ENCODE measurements at regions of chr6 and their contacts with region 1.

Region 1: DNA sequence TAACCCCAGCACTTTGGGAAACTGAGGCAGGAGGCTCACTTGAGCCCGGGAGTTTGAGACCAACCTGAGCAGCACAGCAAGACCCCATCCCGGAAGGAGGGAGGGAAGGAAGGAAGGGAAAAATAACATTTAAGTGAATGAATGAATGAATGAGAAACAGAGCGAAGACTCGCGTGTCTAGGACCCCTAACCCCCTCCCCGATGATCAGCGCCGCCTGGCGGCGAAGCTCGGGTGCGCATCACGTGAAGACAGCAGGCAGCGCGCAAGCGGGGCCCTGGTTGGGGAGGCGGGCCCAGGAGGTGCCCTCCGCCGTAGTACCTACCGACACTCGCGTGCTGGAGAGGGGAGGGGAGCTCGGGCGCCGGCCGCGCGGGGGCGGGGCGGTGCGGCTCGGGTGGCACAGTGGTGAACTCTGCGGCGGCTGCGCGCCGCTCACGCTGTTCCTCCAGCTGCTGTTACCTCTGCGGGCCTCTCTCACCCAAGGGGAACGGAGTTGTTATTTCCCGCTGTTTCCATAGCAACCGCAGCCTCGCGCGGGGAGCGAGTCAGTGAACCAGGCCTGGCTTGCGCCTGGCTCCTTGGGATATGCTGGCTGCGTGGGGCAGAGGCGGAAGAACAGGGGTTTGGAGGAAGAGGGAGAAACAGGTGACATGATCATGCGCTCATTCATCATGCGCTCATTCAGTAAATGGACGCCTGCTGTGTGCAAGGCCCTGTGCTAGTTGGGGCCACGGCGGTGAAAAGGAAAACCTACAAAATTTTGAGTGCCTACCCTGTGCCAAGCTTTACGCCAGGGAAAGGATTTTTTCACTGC is 2.0 kb upstream of the DCDC2 start:
- DNase-seq: peak; percentile 93 to 94
- H3K4me3 ChIP-seq: peak overlapping the region; percentile 47
- H3K4me3 Mint-ChIP-seq: peak overlapping the region; percentile 76
- H3K27ac Mint-ChIP-seq: peak overlapping the region; percentile 96
- H3K4me1 ChIP-seq: peaks cover 14% of the 10 kb centered on the region; the same call in 1 of the 2 replicates
- H3K4me1 Mint-ChIP-seq: peaks cover 8% of the 10 kb centered on the region
- H3K27me3 ChIP-seq: no peaks in the 10 kb centered on the region
- H3K27me3 Mint-ChIP-seq: no peaks in the 10 kb centered on the region
- CTCF ChIP-seq: peak; percentile 88

Region 2: DNA sequence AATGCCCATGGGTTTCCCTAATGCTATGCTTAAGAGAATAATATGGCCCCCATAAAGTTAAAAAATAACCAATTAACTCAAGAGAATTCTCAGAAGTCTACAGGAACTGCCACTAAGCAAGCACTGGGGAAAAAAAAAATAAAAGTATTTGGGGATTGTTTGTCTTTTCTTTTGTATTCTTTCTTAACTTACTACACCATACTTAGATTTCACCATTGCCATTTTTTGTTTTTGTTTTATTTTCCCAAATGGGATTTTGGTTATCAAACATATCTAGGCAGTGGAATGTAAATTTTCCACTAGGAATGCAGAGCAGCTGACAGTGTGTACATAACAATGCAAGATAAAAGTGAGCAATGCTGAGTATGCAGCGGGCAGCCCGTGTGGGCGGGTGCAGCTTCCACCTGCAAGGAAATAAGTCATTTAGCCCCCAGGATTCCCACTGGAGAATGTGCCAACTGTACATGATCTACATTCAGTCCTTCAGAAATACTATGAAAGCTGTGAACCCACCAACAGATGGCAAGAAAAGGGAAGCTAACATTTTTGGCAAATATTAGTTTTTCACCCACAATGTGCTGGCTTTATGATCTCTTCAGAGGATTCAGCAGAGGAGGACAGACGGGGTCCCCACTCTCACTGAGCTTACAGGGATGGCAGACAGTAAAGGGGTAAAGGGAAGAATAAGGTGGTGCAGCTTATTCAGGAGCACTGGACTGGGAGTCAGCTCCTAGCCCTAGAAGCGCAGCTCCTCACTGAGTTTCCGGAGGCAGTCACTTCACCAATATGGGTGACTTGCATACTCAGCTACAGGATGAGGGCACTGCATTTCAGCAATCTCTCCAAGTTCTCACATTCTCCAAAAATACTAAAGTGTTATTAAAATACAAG is 46.4 kb before region 1 on chr6:
- CTCF ChIA-PET with region 1: interaction called, 6 read pairs
- POLR2A ChIA-PET with region 1: interaction called, 5 read pairs
- intact Hi-C with region 1: loop called (anchors 1 kb)
- DNase-seq: peak; percentile 83 to 90
- H3K4me3 ChIP-seq: no peak overlapping the region
- H3K4me3 Mint-ChIP-seq: peak overlapping the region; percentile 47
- H3K27ac Mint-ChIP-seq: peak overlapping the region; percentile 83
- H3K4me1 ChIP-seq: peaks cover 32% of the 10 kb centered on the region
- H3K4me1 Mint-ChIP-seq: peaks cover 42% of the 10 kb centered on the region
- H3K27me3 ChIP-seq: no peaks in the 10 kb centered on the region
- H3K27me3 Mint-ChIP-seq: no peaks in the 10 kb centered on the region
- CTCF ChIP-seq: no peak

Region 3: DNA sequence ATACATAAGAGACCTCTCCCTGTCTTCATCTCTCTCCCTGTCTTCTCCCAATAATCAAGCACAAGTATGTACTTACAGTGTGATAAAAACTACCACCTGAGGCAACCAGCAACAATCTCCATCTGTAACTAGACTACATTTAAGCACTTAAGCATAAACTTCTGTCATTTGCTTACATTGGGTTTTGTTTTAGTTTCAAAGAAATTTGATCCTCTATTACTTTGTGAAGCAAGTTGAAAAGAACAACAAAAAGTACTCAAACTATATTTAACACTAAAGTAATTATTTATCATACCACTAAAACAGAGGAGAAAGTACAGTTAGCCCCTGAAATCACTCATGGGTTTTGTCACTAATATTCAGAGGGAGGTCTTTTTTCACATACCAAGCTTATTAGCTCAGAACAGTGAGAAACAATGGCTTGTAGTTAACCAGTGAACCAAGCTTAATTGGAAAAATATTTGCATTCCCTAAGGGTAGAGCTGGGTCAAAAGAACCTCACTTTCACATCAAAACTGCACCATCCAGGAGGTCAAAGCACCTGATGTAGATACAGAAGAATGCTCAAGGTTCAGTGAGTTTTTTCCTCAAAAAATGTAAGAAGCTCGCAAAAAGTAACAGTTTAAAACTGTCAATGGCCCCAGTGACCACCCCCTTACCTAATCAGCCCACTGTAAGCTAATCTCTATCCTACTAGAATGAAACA is 36.1 kb before region 1 on chr6:
- CTCF ChIA-PET with region 1: no interaction called
- POLR2A ChIA-PET with region 1: interaction called, 3 read pairs
- intact Hi-C with region 1: loop called (anchors 2 kb)
- DNase-seq: no peak
- H3K4me3 ChIP-seq: no peak overlapping the region
- H3K4me3 Mint-ChIP-seq: peak overlapping the region; percentile 28
- H3K27ac Mint-ChIP-seq: peak overlapping the region; percentile 45
- H3K4me1 ChIP-seq: peaks cover 83% of the 10 kb centered on the region
- H3K4me1 Mint-ChIP-seq: peaks cover 57% of the 10 kb centered on the region
- H3K27me3 ChIP-seq: no peaks in the 10 kb centered on the region
- H3K27me3 Mint-ChIP-seq: no peaks in the 10 kb centered on the region
- CTCF ChIP-seq: no peak

Region 4: GRCh38 chr6:24340998-24341938 is 18.6 kb before region 1 on chr6:
- CTCF ChIA-PET with region 1: interaction called, 4 read pairs
- POLR2A ChIA-PET with region 1: no interaction called
- intact Hi-C with region 1: loop called (anchors 1 kb)
- DNase-seq: peak; percentile 52 to 72
- H3K4me3 ChIP-seq: no peak overlapping the region
- H3K4me3 Mint-ChIP-seq: peak overlapping the region; percentile 55
- H3K27ac Mint-ChIP-seq: peak overlapping the region; percentile 92
- H3K4me1 ChIP-seq: peaks cover 46% of the 10 kb centered on the region
- H3K4me1 Mint-ChIP-seq: peaks cover 66% of the 10 kb centered on the region
- H3K27me3 ChIP-seq: no peaks in the 10 kb centered on the region
- H3K27me3 Mint-ChIP-seq: no peaks in the 10 kb centered on the region
- CTCF ChIP-seq: no peak

Region 5: DNA sequence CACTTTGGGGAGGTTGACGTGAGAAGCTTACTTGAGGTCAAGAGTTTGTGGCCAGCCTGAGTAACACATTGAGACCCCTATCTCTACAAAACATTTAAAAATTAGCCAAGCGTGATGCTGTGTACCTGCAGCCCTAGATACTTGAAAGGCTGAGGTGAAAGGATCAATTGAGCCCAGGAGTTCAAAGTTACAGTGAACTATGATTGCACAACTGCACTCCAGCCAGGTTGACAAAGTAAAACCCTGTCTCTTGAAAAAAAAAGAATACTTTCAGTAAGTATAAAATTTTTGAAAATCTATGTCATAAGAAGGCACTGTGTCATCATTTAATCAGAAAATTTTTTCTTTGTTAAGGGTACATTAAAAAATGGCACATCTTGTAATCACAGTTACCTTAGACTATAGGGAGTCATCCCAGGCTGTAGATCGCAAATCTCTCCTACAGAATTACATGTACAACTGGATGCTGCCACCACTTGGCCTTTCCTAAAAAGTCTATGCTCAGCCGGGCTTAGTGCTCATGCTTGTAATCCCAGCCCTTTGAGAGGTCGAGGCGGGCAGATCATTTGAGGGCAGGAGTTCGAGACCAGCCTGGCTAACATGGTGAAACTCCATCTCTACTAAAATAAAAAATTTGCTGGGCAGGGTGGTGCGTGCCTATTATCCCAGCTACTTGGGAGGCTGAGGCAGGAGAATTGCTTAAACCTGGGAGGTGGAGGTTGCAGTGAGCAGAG is 25.9 kb after region 1 on chr6:
- CTCF ChIA-PET with region 1: interaction called, 9 read pairs
- POLR2A ChIA-PET with region 1: interaction called, 9 read pairs
- intact Hi-C with region 1: loop called (anchors 2 kb)
- DNase-seq: peak in 1 of 2 experiments; percentile 29
- H3K4me3 ChIP-seq: no peak overlapping the region
- H3K4me3 Mint-ChIP-seq: no peak overlapping the region
- H3K27ac Mint-ChIP-seq: no peak overlapping the region
- H3K4me1 ChIP-seq: peaks cover 21% of the 10 kb centered on the region
- H3K4me1 Mint-ChIP-seq: peaks cover 28% of the 10 kb centered on the region
- H3K27me3 ChIP-seq: no peaks in the 10 kb centered on the region
- H3K27me3 Mint-ChIP-seq: no peaks in the 10 kb centered on the region
- CTCF ChIP-seq: no peak

Measured in Caco-2 (cell line).